ENCODE measurements at regions of chr20 and their contacts with region 1.

Region 1: GRCh38 chr20:4592316-4593148 is 129.2 kb upstream of the PRND start:
- DNase-seq: peak; percentile 35 to 51 (median 38)
- H3K4me3 ChIP-seq: peak overlapping the region in 1 of 2 donors; percentile 40
- H3K4me3 Mint-ChIP-seq: peak overlapping the region; percentile 61 to 86 (median 76)
- H3K27ac ChIP-seq: no peak overlapping the region
- H3K27ac Mint-ChIP-seq: peak overlapping the region in 2 of 7 donors; percentile 48 to 83
- H3K4me1 ChIP-seq: peaks cover 12% of the 10 kb centered on the region
- H3K4me1 Mint-ChIP-seq: peaks cover 5 to 13% (median 6%) of the 10 kb centered on the region in 4 donors
- H3K27me3 ChIP-seq: no peaks in the 10 kb centered on the region
- H3K27me3 Mint-ChIP-seq: peaks cover 11 to 13% of the 10 kb centered on the region in 2 donors

Region 2: DNA sequence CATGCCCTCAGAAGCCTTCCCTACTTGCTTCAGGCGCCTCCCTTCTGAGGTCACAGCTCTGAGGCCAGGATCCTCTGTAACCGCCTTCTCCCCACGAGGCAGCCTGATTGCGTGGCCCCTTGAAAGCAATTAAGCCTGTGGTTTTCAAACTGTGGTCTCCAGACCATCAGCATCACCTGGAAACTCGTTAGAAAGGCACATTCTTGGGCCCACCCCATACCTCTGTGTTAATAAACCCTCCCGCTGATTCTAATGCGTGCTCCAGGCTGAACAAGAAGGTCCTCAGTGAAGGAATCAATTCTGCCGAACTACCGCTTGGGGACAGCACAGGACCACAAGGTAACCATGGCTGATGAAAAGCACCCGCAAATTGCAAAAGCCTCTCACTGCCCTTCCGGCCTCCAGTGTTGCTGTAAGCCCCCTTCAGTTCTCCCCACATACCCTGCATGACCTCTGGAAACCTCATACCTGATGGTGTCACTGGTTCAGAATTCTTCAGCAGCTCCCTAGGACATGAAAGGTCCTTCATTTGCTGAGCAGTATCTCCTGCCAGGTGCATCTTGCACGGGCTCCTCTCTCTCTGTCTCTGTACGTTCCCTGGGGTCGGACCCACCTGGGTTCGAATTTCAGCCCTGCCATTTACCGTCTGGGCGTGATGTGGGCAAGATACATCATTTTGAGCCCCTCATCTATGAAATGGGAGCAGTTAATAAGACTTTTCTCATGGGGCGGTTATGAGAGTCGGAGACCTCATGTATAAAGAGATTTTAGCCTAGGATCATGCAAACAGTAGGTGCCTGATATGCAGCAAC is 483.8 kb before region 1 on chr20:
- CTCF ChIA-PET with region 1: interaction called, 9 read pairs
- POLR2A ChIA-PET with region 1: no interaction called
- intact Hi-C with region 1: loop called (anchors 1 kb)
- DNase-seq: peak; percentile 60 to 67 (median 63)
- H3K4me3 ChIP-seq: no peak overlapping the region
- H3K4me3 Mint-ChIP-seq: no peak overlapping the region
- H3K27ac ChIP-seq: no peak overlapping the region
- H3K27ac Mint-ChIP-seq: no peak overlapping the region
- H3K4me1 ChIP-seq: no peaks in the 10 kb centered on the region
- H3K4me1 Mint-ChIP-seq: peaks cover 0 to 6% (median 1%) of the 10 kb centered on the region in 4 donors
- H3K27me3 ChIP-seq: no peaks in the 10 kb centered on the region
- H3K27me3 Mint-ChIP-seq: peaks cover 2 to 13% of the 10 kb centered on the region in 2 donors

Region 3: DNA sequence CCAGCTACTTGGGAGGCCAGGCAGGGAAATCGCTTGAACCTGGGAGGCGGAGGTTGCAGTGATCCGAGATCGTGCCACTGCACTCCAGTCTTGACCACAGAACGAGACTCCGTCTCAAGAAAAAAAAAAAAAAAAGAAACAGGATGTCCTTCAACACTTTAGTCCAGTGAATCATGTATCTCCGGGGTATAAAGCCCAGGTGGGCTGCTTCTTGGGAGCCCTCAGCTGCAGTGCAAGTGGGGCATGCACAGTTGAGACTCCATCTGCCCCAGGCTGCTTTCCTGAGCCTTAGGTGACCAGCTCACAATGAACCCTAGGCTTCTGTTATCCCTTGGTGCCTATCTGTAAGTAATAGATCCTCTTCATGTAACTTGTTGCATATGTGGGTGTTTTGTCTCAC is 390.1 kb before region 1 on chr20:
- CTCF ChIA-PET with region 1: no interaction called
- POLR2A ChIA-PET with region 1: no interaction called
- intact Hi-C with region 1: no loop called
- DNase-seq: no peak
- H3K4me3 ChIP-seq: no peak overlapping the region
- H3K4me3 Mint-ChIP-seq: no peak overlapping the region
- H3K27ac ChIP-seq: no peak overlapping the region
- H3K27ac Mint-ChIP-seq: no peak overlapping the region
- H3K4me1 ChIP-seq: no peaks in the 10 kb centered on the region
- H3K4me1 Mint-ChIP-seq: no peaks in the 10 kb centered on the region
- H3K27me3 ChIP-seq: no peaks in the 10 kb centered on the region
- H3K27me3 Mint-ChIP-seq: peaks cover 4 to 8% of the 10 kb centered on the region in 2 donors

Region 4: GRCh38 chr20:4555188-4555890 is 37.2 kb before region 1 on chr20:
- CTCF ChIA-PET with region 1: no interaction called
- POLR2A ChIA-PET with region 1: no interaction called
- intact Hi-C with region 1: no loop called
- DNase-seq: no peak
- H3K4me3 ChIP-seq: no peak overlapping the region
- H3K4me3 Mint-ChIP-seq: no peak overlapping the region
- H3K27ac ChIP-seq: no peak overlapping the region
- H3K27ac Mint-ChIP-seq: no peak overlapping the region
- H3K4me1 ChIP-seq: no peaks in the 10 kb centered on the region
- H3K4me1 Mint-ChIP-seq: no peaks in the 10 kb centered on the region
- H3K27me3 ChIP-seq: peaks cover 12% of the 10 kb centered on the region
- H3K27me3 Mint-ChIP-seq: peaks cover 29 to 35% of the 10 kb centered on the region in 2 donors

Region 5: DNA sequence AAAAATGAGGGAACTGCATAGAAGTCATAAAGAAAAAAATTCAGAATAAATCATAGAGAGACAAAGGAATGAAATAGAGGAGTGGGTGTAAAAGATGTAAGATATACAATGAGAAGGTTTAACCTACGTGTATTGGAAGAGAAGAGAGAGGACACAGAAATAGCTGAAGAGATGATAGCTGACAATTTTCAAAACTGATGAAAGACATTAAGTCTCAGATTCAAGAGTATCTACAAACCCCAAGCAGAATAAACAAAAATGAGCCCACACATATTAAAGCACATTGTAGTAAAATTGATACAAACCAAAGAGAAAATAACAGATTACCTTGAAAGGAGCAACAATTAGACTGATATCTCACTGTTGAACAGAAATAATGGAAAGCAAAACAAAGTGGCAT is 14.2 kb before region 1 on chr20:
- CTCF ChIA-PET with region 1: no interaction called
- POLR2A ChIA-PET with region 1: no interaction called
- intact Hi-C with region 1: no loop called
- DNase-seq: no peak
- H3K4me3 ChIP-seq: no peak overlapping the region
- H3K4me3 Mint-ChIP-seq: no peak overlapping the region
- H3K27ac ChIP-seq: no peak overlapping the region
- H3K27ac Mint-ChIP-seq: no peak overlapping the region
- H3K4me1 ChIP-seq: no peaks in the 10 kb centered on the region
- H3K4me1 Mint-ChIP-seq: no peaks in the 10 kb centered on the region
- H3K27me3 ChIP-seq: peaks cover 10% of the 10 kb centered on the region
- H3K27me3 Mint-ChIP-seq: peaks cover 27 to 53% of the 10 kb centered on the region in 2 donors

Region 6: DNA sequence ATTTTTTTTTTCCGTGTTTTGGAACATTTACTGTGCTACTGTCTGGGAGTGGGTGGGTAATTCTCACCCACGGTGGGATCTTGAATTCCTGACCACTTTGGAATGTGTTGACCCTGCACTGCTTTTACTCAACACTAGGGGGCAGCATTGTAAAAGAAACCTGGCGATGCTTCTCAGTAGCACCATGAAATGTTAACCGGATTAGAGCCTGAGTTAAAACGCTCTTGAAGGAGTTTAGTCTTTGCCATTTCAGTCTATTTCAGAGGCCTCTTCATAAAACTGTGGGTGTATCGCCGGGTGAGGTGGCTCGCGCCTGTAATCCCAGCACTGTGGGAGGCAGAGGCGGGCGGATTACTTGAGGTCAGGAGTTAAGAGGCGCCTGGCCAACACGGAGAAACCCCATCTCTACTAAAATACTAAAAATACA is 14.8 kb after region 1 on chr20:
- CTCF ChIA-PET with region 1: interaction called, 11 read pairs
- POLR2A ChIA-PET with region 1: no interaction called
- intact Hi-C with region 1: no loop called
- DNase-seq: peak; percentile 65 to 69 (median 66)
- H3K4me3 ChIP-seq: no peak overlapping the region
- H3K4me3 Mint-ChIP-seq: no peak overlapping the region
- H3K27ac ChIP-seq: no peak overlapping the region
- H3K27ac Mint-ChIP-seq: peak overlapping the region in 2 of 7 donors; percentile 67 to 77
- H3K4me1 ChIP-seq: no peaks in the 10 kb centered on the region
- H3K4me1 Mint-ChIP-seq: peaks cover 0 to 5% (median 2%) of the 10 kb centered on the region in 4 donors
- H3K27me3 ChIP-seq: peaks cover 5% of the 10 kb centered on the region
- H3K27me3 Mint-ChIP-seq: peaks cover 11 to 16% of the 10 kb centered on the region in 2 donors